CD8-positive, alpha-beta memory T cell (primary cell): ENCODE measurements at regions of chr9 and their contacts with region 1.

Region 1: DNA sequence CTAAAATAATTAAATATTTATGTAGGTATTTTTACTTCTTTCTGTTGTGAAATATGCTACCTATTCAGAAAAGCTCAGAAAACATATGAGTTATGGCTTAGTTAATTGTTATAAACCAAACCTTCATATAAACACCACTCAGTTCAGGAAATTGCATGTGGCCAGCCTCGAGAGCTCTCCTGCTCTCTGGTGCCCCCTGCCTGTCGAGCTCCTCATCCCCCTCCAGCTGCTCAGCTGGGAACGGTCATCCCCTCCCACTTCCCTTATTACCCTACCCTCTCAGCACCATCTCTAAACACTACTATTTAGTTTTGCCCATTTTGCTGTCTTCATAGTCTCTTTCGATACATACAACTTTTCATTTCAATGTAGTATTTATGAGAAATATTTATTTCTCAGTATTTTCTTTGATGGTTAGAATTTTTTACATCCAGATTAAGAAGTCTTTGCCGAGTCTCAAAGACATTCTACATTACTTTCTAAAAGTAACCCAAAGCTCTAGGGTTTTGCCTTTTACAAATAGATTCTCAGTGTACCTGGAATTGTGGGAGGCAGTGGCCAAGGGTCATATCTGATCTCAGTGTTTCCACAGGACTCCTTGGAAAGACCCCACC is 51.2 kb upstream of the SEMA4D start:
- DNase-seq: peak; percentile 76 to 86 (median 82)
- H3K4me3 ChIP-seq: no peak overlapping the region
- H3K4me3 Mint-ChIP-seq: peak overlapping the region in 1 of 7 donors; percentile 11
- H3K27ac ChIP-seq: no peak overlapping the region
- H3K27ac Mint-ChIP-seq: peak overlapping the region in 6 of 8 donors; percentile 5 to 72 (median 52)
- H3K4me1 ChIP-seq: peaks cover 15% of the 10 kb centered on the region
- H3K4me1 Mint-ChIP-seq: peaks cover 7 to 14% (median 13%) of the 10 kb centered on the region in 3 donors
- H3K27me3 ChIP-seq: no peaks in the 10 kb centered on the region
- H3K27me3 Mint-ChIP-seq: no peaks in the 10 kb centered on the region

Region 2: DNA sequence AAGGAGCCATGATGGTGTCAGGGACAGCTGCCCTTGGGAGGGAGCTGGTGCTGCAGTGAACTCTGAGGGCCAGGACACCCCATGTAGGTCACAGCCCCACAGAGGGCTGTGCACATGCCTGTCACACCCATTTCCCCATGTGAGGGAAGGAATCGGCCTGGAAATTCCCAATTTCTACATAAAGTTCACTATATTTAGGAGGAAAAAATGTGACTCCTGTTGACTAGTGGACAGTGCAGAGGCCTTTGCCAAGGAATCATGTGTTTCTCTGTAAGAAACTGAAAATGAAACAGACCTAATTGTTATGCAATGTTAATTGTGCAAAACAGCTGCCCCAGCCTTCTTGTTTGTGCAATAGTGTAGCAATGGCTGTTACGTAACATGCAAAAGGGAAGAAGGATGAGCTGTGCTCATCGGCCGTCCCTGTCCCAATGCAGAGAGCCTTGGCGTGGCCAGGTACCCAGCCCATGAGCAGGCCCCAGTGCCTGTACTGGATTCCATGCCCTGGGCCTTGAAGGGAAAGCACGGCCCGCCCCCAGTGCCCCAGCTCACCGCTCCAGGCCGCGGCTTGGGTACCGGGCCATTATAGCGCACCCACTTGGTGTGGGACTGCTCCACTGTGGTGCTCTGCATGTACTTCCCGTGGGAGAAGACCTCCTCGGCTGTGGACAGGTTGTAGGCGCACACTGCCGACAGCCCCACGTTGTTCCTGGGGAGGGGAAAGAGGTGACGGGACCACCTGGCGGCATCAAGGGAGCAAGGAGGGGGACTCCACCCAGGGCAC is 160.9 kb before region 1 on chr9:
- CTCF ChIA-PET with region 1: interaction called, 13 read pairs
- POLR2A ChIA-PET with region 1: no interaction called
- DNase-seq: no peak
- H3K4me3 ChIP-seq: no peak overlapping the region
- H3K4me3 Mint-ChIP-seq: no peak overlapping the region
- H3K27ac ChIP-seq: no peak overlapping the region
- H3K27ac Mint-ChIP-seq: peak overlapping the region in 3 of 8 donors; percentile 34 to 41 (median 39)
- H3K4me1 ChIP-seq: no peaks in the 10 kb centered on the region
- H3K4me1 Mint-ChIP-seq: peaks cover 2 to 9% (median 8%) of the 10 kb centered on the region in 3 donors
- H3K27me3 ChIP-seq: no peaks in the 10 kb centered on the region
- H3K27me3 Mint-ChIP-seq: peaks cover 0 to 3% of the 10 kb centered on the region in 2 donors

Region 3: DNA sequence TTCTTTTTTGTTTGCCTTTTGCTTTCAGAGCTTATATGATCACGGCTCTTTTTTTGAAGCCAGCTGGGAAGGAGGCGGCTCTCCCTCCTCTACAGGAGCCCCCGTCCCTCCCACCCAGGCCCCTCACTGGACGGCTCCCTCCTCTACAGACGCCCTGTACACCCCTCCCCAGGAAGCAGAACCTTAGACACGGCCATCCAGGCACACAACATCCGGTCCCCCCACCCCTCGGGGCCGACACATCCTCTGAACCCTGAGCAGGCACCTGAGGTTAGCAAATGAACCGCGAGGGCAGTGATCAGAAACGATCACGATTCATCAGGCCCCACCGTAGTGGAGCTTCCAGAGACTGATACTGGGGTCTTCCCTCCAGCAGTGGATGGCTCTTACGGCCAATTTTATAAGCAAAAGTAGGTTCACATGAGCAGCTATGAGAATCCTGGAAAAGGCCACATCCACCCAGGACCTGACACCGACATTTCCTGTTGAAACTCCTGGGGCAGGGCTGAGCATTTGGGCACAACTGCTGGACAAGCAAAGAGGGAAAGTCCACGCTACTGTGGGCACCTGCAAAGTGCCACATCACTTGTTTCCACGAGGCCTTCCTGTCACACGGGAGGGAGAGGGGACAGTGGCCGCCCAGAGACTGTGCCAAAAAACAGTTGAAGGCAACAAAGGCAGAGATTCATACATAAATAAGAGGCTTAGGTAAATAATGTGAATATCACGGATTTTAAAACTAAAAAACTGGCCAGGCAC is 130.1 kb before region 1 on chr9:
- CTCF ChIA-PET with region 1: interaction called, 184 read pairs
- POLR2A ChIA-PET with region 1: interaction called, 3 read pairs
- DNase-seq: peak; percentile 59 to 87 (median 74)
- H3K4me3 ChIP-seq: peak overlapping the region; percentile 35
- H3K4me3 Mint-ChIP-seq: peak overlapping the region; percentile 59 to 90 (median 84)
- H3K27ac ChIP-seq: peak overlapping the region; percentile 59
- H3K27ac Mint-ChIP-seq: peak overlapping the region; percentile 89 to 99 (median 97)
- H3K4me1 ChIP-seq: peaks cover 82% of the 10 kb centered on the region
- H3K4me1 Mint-ChIP-seq: peaks cover 82 to 98% (median 97%) of the 10 kb centered on the region in 3 donors
- H3K27me3 ChIP-seq: no peaks in the 10 kb centered on the region
- H3K27me3 Mint-ChIP-seq: no peaks in the 10 kb centered on the region

Region 4: GRCh38 chr9:89448381-89448780 is 100.8 kb before region 1 on chr9:
- CTCF ChIA-PET with region 1: interaction called, 37 read pairs
- POLR2A ChIA-PET with region 1: interaction called, 3 read pairs
- DNase-seq: peak in 3 of 5 donors; percentile 45 to 74 (median 55)
- H3K4me3 ChIP-seq: peak overlapping the region; percentile 39
- H3K4me3 Mint-ChIP-seq: peak overlapping the region; percentile 6 to 80 (median 75)
- H3K27ac ChIP-seq: no peak overlapping the region
- H3K27ac Mint-ChIP-seq: peak overlapping the region; percentile 85 to 98 (median 94)
- H3K4me1 ChIP-seq: peaks cover 90% of the 10 kb centered on the region
- H3K4me1 Mint-ChIP-seq: peaks cover 87 to 96% (median 93%) of the 10 kb centered on the region in 3 donors
- H3K27me3 ChIP-seq: no peaks in the 10 kb centered on the region
- H3K27me3 Mint-ChIP-seq: peaks cover 0 to 2% of the 10 kb centered on the region in 2 donors

Region 5: DNA sequence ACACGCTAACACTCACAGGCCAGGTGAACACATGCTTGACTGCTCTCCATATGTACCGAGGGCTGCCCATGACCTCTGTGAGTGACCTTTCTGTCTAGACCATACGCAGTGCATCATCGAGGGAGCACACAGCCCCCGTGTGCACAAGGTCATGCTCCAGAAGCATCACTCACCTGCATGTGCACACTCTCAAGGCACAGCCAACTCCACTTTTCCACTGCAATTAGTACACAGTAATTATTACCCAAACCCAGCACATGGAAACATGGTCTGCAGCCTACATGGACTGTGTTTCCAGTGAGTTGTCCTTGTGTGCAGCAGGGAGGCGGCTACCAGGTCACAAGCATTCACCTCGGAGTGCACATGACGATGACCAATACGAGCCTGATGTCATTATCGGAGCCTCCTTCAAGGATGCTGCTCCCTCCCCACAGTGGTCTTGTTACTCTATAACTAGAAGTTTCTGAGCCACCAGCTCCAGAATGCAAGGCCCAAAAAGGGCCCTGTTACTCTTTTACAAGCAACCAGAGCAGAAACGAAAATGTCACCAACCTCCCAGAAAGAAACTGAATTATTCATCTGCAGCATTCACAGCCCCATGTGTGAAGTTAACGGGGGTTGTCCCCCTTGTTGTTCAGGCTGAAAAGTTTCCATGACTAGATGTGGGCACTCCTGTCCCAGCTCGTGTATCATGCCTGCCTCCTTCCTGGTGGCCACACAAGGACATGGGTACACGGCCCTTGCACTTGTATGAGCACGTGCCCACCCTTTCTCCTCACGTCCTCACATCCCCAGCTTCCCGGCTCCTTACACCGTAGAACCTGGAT is 82.5 kb before region 1 on chr9:
- CTCF ChIA-PET with region 1: interaction called, 16 read pairs
- POLR2A ChIA-PET with region 1: interaction called, 4 read pairs
- DNase-seq: peak in 1 of 5 donors; percentile 71
- H3K4me3 ChIP-seq: peak overlapping the region; percentile 33
- H3K4me3 Mint-ChIP-seq: peak overlapping the region; percentile 40 to 89 (median 79)
- H3K27ac ChIP-seq: peak overlapping the region; percentile 35
- H3K27ac Mint-ChIP-seq: peak overlapping the region; percentile 89 to 97 (median 95)
- H3K4me1 ChIP-seq: peaks cover 99% of the 10 kb centered on the region
- H3K4me1 Mint-ChIP-seq: peaks cover 96 to 99% (median 98%) of the 10 kb centered on the region in 3 donors
- H3K27me3 ChIP-seq: no peaks in the 10 kb centered on the region
- H3K27me3 Mint-ChIP-seq: peaks cover 0 to 2% of the 10 kb centered on the region in 2 donors

Region 6: GRCh38 chr9:89497257-89497972 is 51.7 kb before region 1 on chr9:
- CTCF ChIA-PET with region 1: interaction called, 23 read pairs
- POLR2A ChIA-PET with region 1: interaction called, 4 read pairs
- DNase-seq: peak in 3 of 5 donors; percentile 46 to 71 (median 58)
- H3K4me3 ChIP-seq: peak overlapping the region; percentile 82
- H3K4me3 Mint-ChIP-seq: peak overlapping the region; percentile 92 to 99 (median 94)
- H3K27ac ChIP-seq: peak overlapping the region; percentile 60
- H3K27ac Mint-ChIP-seq: peak overlapping the region; percentile 81 to 98 (median 94)
- H3K4me1 ChIP-seq: peaks cover 84% of the 10 kb centered on the region
- H3K4me1 Mint-ChIP-seq: peaks cover 84 to 90% (median 88%) of the 10 kb centered on the region in 3 donors
- H3K27me3 ChIP-seq: no peaks in the 10 kb centered on the region
- H3K27me3 Mint-ChIP-seq: peaks cover 0 to 4% of the 10 kb centered on the region in 2 donors

Region 7: DNA sequence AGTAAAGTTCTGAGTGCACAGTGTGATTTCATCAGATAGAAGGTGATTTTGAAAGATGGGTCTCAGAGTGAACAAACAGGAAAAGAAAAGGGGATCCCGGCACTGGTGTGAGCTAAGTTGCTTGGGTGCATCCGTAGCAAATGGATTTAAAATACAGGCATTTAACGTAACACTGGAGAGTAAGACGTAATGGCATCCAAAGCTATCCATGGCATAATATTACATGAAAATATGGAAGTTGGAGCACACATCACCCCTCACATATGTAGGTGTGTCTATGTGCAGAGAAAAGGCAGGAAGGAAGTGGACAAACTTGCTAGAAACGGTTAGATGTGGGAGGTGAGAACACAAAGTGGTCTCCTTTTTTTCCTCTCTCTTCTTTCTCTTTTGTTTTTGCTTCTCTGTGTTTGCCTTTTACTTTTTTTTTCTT is 13.0 kb before region 1 on chr9:
- CTCF ChIA-PET with region 1: interaction called, 33 read pairs
- POLR2A ChIA-PET with region 1: interaction called, 4 read pairs
- DNase-seq: peak in 2 of 5 donors; percentile 77 to 80
- H3K4me3 ChIP-seq: peak overlapping the region; percentile 18
- H3K4me3 Mint-ChIP-seq: peak overlapping the region; percentile 29 to 76 (median 66)
- H3K27ac ChIP-seq: peak overlapping the region; percentile 20
- H3K27ac Mint-ChIP-seq: peak overlapping the region; percentile 74 to 96 (median 90)
- H3K4me1 ChIP-seq: peaks cover 95% of the 10 kb centered on the region
- H3K4me1 Mint-ChIP-seq: peaks cover 84 to 96% (median 90%) of the 10 kb centered on the region in 3 donors
- H3K27me3 ChIP-seq: no peaks in the 10 kb centered on the region
- H3K27me3 Mint-ChIP-seq: no peaks in the 10 kb centered on the region

Region 8: DNA sequence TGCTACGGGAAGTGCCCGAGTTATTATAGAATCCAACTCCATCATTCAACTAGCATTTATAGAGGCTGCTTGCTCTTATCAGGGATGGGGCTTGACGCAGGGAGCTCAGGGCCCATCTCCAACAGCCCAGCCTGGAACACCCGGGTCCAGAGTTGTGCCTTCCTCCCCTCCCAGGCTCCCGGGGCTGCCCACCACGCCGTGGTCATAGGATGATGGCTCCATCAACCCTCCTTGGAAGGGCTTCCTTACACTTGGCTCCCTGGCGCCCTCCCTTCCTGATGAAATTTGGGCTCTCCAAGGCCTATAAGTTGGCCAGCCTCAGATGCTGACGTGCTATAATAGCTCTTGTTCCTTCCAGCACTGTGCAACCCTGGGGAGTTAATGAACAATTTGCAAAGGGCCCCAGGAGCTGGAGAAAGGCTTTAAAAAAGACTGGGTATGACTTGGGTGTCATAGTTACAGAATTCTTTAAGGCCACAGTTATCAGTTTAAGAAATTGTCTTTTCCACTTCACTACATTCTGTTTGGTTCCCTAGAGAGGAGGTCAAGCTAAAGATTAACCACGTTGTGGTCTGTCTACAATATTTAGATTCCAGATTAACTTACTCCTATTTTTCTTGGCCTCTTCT is 13.2 kb after region 1 on chr9:
- CTCF ChIA-PET with region 1: no interaction called
- POLR2A ChIA-PET with region 1: no interaction called
- DNase-seq: no peak
- H3K4me3 ChIP-seq: no peak overlapping the region
- H3K4me3 Mint-ChIP-seq: no peak overlapping the region
- H3K27ac ChIP-seq: no peak overlapping the region
- H3K27ac Mint-ChIP-seq: no peak overlapping the region
- H3K4me1 ChIP-seq: peaks cover 8% of the 10 kb centered on the region
- H3K4me1 Mint-ChIP-seq: peaks cover 3 to 11% (median 6%) of the 10 kb centered on the region in 3 donors
- H3K27me3 ChIP-seq: no peaks in the 10 kb centered on the region
- H3K27me3 Mint-ChIP-seq: peaks cover 5 to 17% of the 10 kb centered on the region in 2 donors